Naive thymus-derived CD8-positive, alpha-beta T cell (primary cell): ENCODE measurements at regions of chr4 and their contacts with region 1.

Region 1: GRCh38 chr4:184474263-184475095 is at the start of gene IRF2:
- DNase-seq: peak; percentile 85 to 99 (median 95)
- ATAC-seq: peak; percentile 78 to 82
- H3K4me3 Mint-ChIP-seq: peak within 1 kb of the TSS; percentile 92 to 100 (median 98)
- H3K27ac Mint-ChIP-seq: peak within 1 kb of the TSS; percentile 97 to 99 (median 98)
- H3K4me1 Mint-ChIP-seq: peaks cover 40 to 70% (median 68%) of the 10 kb centered on the region in 4 donors
- H3K27me3 Mint-ChIP-seq: no peaks in the 10 kb centered on the region
- polyA plus RNA-seq, gene IRF2: 72.7 to 80.7 (median 78.3) TPM

Region 2: GRCh38 chr4:184453365-184454160 is 20.9 kb before region 1 on chr4:
- POLR2A ChIA-PET with region 1: interaction called, 10 read pairs
- DNase-seq: peak in 8 of 10 donors; percentile 33 to 76 (median 48)
- ATAC-seq: peak; percentile 96 to 99
- H3K4me3 Mint-ChIP-seq: peak overlapping the region; percentile 13 to 82 (median 68)
- H3K27ac Mint-ChIP-seq: peak overlapping the region; percentile 82 to 98 (median 92)
- H3K4me1 Mint-ChIP-seq: peaks cover 48 to 94% (median 89%) of the 10 kb centered on the region in 4 donors
- H3K27me3 Mint-ChIP-seq: no peaks in the 10 kb centered on the region

Region 3: GRCh38 chr4:184503869-184504300 is 29.4 kb after region 1 on chr4:
- POLR2A ChIA-PET with region 1: interaction called, 13 read pairs
- DNase-seq: peak in 5 of 10 donors; percentile 5 to 39 (median 22)
- ATAC-seq: peak; percentile 73 to 74
- H3K4me3 Mint-ChIP-seq: peak overlapping the region; percentile 54 to 83 (median 74)
- H3K27ac Mint-ChIP-seq: peak overlapping the region; percentile 63 to 92 (median 88)
- H3K4me1 Mint-ChIP-seq: peaks cover 14 to 38% (median 34%) of the 10 kb centered on the region in 4 donors
- H3K27me3 Mint-ChIP-seq: no peaks in the 10 kb centered on the region

Region 4: DNA sequence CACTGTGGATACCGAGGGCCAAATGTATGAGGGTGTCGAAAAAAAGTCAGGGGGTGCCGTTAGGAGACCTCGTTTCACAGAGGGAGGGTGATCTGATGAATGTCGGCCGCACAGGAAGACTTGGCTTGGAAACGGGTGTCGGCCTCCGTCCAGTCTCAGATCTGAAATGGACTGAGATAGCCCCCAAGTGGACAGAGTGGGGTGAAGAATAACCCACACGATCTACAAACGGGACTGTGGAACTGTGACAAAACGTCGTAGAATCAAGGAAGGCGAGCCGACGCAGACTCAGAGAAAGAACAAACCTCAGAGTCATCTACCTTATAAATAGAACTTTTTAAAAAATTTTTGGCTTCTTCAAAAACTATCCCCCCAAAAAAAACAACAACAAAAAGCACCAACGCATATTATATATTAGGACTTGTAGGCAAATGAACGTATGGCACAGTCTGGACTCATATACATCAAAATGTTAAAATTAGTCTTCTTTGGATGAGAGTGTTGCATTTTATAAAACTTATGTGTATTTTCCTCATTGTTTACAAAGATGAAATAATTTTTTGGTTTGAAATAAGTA is 63.6 kb after region 1 on chr4:
- POLR2A ChIA-PET with region 1: interaction called, 81 read pairs
- DNase-seq: peak; percentile 15 to 80 (median 62)
- ATAC-seq: peak; percentile 52 to 53
- H3K4me3 Mint-ChIP-seq: peak overlapping the region; percentile 90 to 99 (median 95)
- H3K27ac Mint-ChIP-seq: peak overlapping the region; percentile 90 to 100 (median 99)
- H3K4me1 Mint-ChIP-seq: peaks cover 19 to 43% (median 37%) of the 10 kb centered on the region in 4 donors
- H3K27me3 Mint-ChIP-seq: no peaks in the 10 kb centered on the region